ENCODE measurements at regions of chr3 and their contacts with region 1.

Region 1: GRCh38 chr3:30623351-30623750 is 16.9 kb downstream of the TGFBR2 start:
- DNase-seq: peak; percentile 42
- ATAC-seq: peak; percentile 31
- H3K4me3 Mint-ChIP-seq: peak overlapping the region; percentile 63
- H3K27ac Mint-ChIP-seq: peak overlapping the region; percentile 98
- H3K4me1 Mint-ChIP-seq: peaks cover 86% of the 10 kb centered on the region
- H3K27me3 Mint-ChIP-seq: no peaks in the 10 kb centered on the region
- CTCF ChIP-seq: no peak

Region 2: GRCh38 chr3:30634761-30635735 is 11.7 kb after region 1 on chr3:
- CTCF ChIA-PET with region 1: interaction called, 8 read pairs
- POLR2A ChIA-PET with region 1: interaction called, 86 read pairs
- intact Hi-C with region 1: loop called (anchors 2 kb)
- DNase-seq: no peak
- ATAC-seq: no peak
- H3K4me3 Mint-ChIP-seq: peak overlapping the region; percentile 59
- H3K27ac Mint-ChIP-seq: peak overlapping the region; percentile 98
- H3K4me1 Mint-ChIP-seq: peaks cover 97% of the 10 kb centered on the region
- H3K27me3 Mint-ChIP-seq: no peaks in the 10 kb centered on the region
- CTCF ChIP-seq: peak; percentile 14

Region 3: DNA sequence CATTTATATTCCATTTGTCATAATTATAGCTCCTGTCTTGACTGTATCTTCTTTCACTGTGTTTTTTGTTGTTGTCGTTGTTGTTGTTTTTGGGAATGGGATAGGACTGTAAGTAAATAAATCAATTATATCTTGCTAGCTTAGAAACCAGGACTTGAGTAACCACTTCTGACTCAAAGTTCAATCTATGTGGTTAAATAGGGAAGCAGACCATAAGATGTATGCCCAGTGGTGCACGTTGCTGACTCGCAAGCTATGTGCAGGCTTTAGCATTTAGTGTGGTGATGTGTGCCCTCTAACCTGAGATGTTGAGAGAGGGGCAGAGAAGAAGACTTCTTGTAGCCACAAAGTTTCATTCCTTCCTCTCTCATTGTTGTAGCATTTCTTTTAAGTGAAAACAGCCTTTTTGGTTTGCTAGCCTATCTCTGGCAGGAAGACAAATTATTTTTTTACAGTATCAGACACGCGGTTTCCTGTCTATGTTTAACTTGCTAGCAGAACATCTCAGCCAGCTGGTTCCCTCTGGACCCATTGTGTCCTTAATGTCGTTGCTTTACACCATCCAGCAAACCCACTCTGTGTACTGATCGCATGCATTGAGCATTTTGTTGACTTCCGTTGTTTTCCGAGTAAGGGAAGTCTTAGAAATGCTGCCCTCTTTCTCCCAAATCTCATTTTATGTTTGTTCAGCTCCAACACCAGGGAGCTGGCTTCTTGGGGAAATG is 35.1 kb after region 1 on chr3:
- CTCF ChIA-PET with region 1: interaction called, 15 read pairs
- POLR2A ChIA-PET with region 1: interaction called, 67 read pairs
- intact Hi-C with region 1: loop called (anchors 2 kb)
- DNase-seq: peak; percentile 80
- ATAC-seq: peak; percentile 74
- H3K4me3 Mint-ChIP-seq: peak overlapping the region; percentile 65
- H3K27ac Mint-ChIP-seq: peak overlapping the region; percentile 98
- H3K4me1 Mint-ChIP-seq: peaks cover 100% of the 10 kb centered on the region
- H3K27me3 Mint-ChIP-seq: no peaks in the 10 kb centered on the region
- CTCF ChIP-seq: no peak

Region 4: GRCh38 chr3:30673425-30674341 is 50.3 kb after region 1 on chr3:
- CTCF ChIA-PET with region 1: no interaction called
- POLR2A ChIA-PET with region 1: no interaction called
- intact Hi-C with region 1: no loop called
- DNase-seq: no peak
- ATAC-seq: no peak
- H3K4me3 Mint-ChIP-seq: no peak overlapping the region
- H3K27ac Mint-ChIP-seq: peak overlapping the region; percentile 31
- H3K4me1 Mint-ChIP-seq: peaks cover 90% of the 10 kb centered on the region
- H3K27me3 Mint-ChIP-seq: no peaks in the 10 kb centered on the region
- CTCF ChIP-seq: no peak

Region 5: DNA sequence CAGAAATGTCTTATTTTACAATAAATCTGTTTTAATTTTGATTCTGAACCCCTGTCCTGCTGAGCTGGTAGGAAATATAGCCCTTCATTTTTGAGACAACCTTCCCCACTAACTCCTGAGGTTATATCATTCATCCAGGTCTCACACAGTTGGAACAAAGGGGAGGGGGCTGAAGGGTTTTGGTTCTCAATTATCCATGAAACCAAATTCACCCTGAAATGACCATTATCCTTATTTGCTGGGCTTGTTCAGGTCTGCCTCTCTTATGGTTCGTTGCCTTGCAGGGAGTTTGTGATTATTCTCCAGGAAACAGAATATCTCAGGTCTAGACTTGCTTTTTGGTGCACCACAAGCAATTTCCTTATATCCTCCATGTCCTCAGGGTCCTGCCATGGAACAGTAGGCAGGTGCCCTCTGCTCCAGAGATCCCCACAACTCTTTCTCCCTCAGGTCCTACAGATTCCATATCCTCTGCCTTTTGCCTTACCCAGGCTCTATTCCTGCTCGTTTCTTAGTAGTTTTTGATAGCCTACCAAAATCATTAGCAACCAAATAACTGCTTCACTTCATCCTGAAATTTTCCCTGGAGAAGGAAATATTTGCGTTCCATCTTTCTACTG is 77.5 kb after region 1 on chr3:
- CTCF ChIA-PET with region 1: no interaction called
- POLR2A ChIA-PET with region 1: no interaction called
- intact Hi-C with region 1: no loop called
- DNase-seq: no peak
- ATAC-seq: no peak
- H3K4me3 Mint-ChIP-seq: no peak overlapping the region
- H3K27ac Mint-ChIP-seq: no peak overlapping the region
- H3K4me1 Mint-ChIP-seq: peaks cover 26% of the 10 kb centered on the region
- H3K27me3 Mint-ChIP-seq: no peaks in the 10 kb centered on the region
- CTCF ChIP-seq: no peak

Measured in activated CD8-positive, alpha-beta T cell treated with anti-CD3 and anti-CD28 coated beads for 36 hours (primary cell).